Colonic mucosa (tissue), 4 donors: ENCODE measurements at regions of chr16 and their contacts with region 1.

Region 1: GRCh38 chr16:53449632-53450517 is 15.6 kb downstream of the RBL2 start:
- DNase-seq: no peak
- H3K4me3 ChIP-seq: no peak overlapping the region
- H3K27ac ChIP-seq: no peak overlapping the region
- H3K4me1 ChIP-seq: no peaks in the 10 kb centered on the region
- H3K27me3 ChIP-seq: no peaks in the 10 kb centered on the region
- CTCF ChIP-seq: no peak

Region 2: DNA sequence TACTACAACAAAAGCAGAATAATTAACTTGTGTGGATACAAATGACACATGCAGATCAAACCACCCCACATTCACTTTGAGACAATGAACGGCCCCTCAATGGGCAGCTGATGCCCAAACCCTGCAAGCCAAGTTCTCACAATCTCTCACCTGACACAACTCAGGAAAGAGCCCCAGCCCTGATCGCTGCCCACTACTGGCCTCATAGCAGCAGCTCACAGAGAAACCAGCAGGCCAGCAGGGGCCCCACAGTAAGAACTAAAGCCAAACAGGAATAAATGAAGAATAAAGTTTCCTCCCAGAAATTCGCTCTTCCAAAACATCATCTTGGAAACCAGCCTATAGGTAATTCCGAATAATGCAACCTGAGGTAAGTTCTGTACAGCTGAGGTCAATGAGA is 45.5 kb after region 1 on chr16:
- intact Hi-C with region 1: loop called (anchors 10 kb)
- DNase-seq: no peak
- H3K4me3 ChIP-seq: no peak overlapping the region
- H3K27ac ChIP-seq: no peak overlapping the region
- H3K4me1 ChIP-seq: peaks cover 3% of the 10 kb centered on the region
- H3K27me3 ChIP-seq: no peaks in the 10 kb centered on the region
- CTCF ChIP-seq: no peak